ENCODE measurements at regions of chr2 and their contacts with region 1.

Region 1: DNA sequence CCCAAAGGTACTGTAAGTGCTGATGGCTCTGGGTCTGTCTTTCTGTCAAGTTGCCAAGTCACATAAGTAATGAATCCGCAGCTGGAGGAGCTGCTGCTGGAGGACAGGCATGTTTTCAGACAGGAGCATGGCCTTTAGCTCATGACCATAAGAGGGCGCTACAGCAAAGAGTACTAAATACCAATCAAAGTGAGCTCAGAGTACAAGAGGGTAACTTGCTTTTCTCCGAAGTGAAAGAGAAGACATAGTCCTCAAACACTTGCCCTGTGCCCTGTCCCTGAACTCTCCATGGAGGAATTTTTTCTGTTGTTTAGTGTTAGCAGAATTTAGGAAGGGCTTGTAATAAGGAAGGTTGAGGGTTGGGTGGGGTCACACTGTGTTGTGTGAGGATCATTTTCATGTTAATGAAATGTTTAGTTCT is 58.0 kb upstream of the EML6 start:
- DNase-seq: peak; percentile 32
- ATAC-seq: peak; percentile 83
- H3K4me3 ChIP-seq: no peak overlapping the region
- H3K27ac ChIP-seq: no peak overlapping the region
- H3K4me1 ChIP-seq: peaks cover 0 to 8% of the 10 kb centered on the region in 2 experiments; a peak in 1 of 4 replicates
- H3K27me3 ChIP-seq: no peaks in the 10 kb centered on the region
- CTCF ChIP-seq: peak; percentile 33 to 85 (median 78); a peak in 5 of 6 replicates
- POLR2A ChIP-seq: no peak
- RAD21 ChIP-seq: peak; percentile 63

Region 2: DNA sequence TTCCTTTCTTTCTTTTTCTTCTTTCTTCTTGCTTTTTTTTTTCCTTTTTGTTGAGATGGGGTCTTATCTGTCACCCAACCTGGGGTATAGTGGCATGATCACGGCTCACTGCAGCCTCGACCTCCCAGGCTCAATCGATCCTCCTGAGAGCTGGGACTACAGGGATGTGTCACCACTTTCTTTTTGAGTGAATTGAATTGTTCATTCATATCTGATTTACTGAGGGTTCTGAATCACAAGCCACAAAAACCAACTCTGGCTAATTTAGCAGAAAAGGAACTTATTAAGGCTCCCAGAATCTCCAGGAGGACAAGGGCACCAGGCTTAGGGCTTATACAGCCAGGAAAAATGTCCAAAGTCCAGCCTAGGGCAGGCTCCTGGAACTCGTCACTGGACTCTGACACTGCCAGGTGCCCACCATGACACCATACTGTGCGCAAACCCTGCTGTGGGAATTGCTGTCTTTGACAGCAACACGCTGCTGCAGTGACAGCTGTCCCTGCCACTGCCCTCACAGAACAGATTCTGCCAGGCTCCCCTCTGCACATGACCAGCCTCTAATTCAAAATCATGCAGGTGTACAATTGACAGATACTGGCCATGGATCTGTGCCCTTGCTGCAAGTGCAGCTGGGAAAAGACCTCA is 15.1 kb after region 1 on chr2:
- CTCF ChIA-PET with region 1: interaction called, 30 read pairs
- POLR2A ChIA-PET with region 1: no interaction called
- RAD21 ChIA-PET with region 1: no interaction called
- intact Hi-C with region 1: no loop called
- DNase-seq: no peak
- ATAC-seq: no peak
- H3K4me3 ChIP-seq: no peak overlapping the region
- H3K27ac ChIP-seq: no peak overlapping the region
- H3K4me1 ChIP-seq: no peaks in the 10 kb centered on the region
- H3K27me3 ChIP-seq: no peaks in the 10 kb centered on the region
- CTCF ChIP-seq: no peak
- POLR2A ChIP-seq: no peak
- RAD21 ChIP-seq: no peak

Region 3: DNA sequence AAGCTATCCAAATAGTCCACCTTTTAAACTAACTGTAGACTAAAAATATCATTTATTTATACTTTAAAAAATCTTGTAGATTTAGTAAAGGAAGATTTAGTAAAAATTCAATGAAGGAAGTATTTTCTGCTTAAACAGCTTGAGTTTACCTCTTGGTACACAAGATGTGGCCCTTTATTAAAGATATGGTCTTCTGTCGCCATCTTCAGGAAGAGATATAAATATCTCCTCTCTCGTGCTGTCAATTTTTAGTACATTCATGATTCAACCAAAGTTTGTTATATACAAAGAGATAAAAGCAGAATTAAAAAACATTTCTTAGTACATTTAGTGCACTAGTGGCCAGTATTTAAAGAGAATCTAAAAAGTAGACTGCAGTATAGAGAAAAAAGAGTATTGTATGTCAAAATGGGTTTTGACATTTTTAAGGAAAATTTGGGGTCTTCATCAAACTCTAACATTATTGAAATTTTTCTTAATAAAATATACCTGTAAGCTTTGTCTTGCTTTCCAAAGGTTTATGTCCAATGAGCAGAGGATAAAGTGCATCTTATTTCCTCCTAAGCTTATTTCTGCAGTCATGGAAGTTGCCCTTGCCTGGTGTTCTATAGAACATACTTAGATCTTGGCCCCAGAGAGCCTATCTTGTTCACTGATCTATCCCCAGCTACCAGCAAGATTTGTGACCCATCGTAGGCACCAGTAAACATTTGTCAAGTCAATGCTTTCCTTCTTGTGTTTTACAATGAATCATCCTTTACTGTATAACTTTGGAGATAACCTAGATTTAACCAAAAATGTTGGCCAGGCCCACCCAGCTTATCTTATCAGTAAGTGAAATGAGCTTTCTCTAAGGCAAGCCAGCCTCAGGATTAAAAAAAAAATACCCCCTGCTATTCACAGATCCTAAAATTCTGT is 39.5 kb after region 1 on chr2:
- CTCF ChIA-PET with region 1: interaction called, 47 read pairs
- POLR2A ChIA-PET with region 1: interaction called, 6 read pairs
- RAD21 ChIA-PET with region 1: interaction called in 1 of 2 experiments, 3 read pairs
- intact Hi-C with region 1: loop called (anchors 1 kb)
- DNase-seq: peak; percentile 42
- ATAC-seq: peak; percentile 82
- H3K4me3 ChIP-seq: no peak overlapping the region
- H3K27ac ChIP-seq: no peak overlapping the region
- H3K4me1 ChIP-seq: no peaks in the 10 kb centered on the region
- H3K27me3 ChIP-seq: no peaks in the 10 kb centered on the region
- CTCF ChIP-seq: peak; percentile 33 to 78 (median 69); a peak in 5 of 6 replicates
- POLR2A ChIP-seq: no peak
- RAD21 ChIP-seq: peak; percentile 84

Region 4: GRCh38 chr2:55010149-55010591 is 344.7 kb after region 1 on chr2:
- CTCF ChIA-PET with region 1: no interaction called
- POLR2A ChIA-PET with region 1: no interaction called
- RAD21 ChIA-PET with region 1: no interaction called
- intact Hi-C with region 1: loop called (anchors 10 kb)
- DNase-seq: no peak
- ATAC-seq: no peak
- H3K4me3 ChIP-seq: no peak overlapping the region
- H3K27ac ChIP-seq: no peak overlapping the region
- H3K4me1 ChIP-seq: peaks cover 22 to 36% of the 10 kb centered on the region in 2 experiments
- H3K27me3 ChIP-seq: no peaks in the 10 kb centered on the region
- CTCF ChIP-seq: no peak
- POLR2A ChIP-seq: no peak
- RAD21 ChIP-seq: no peak

Region 5: GRCh38 chr2:55175254-55176025 is 510.0 kb after region 1 on chr2:
- CTCF ChIA-PET with region 1: interaction called, 6 read pairs
- POLR2A ChIA-PET with region 1: no interaction called
- RAD21 ChIA-PET with region 1: no interaction called
- intact Hi-C with region 1: loop called (anchors 5 kb)
- DNase-seq: peak; percentile 37
- ATAC-seq: peak; percentile 81
- H3K4me3 ChIP-seq: no peak overlapping the region
- H3K27ac ChIP-seq: no peak overlapping the region
- H3K4me1 ChIP-seq: no peaks in the 10 kb centered on the region; a peak in 1 of 4 replicates
- H3K27me3 ChIP-seq: no peaks in the 10 kb centered on the region
- CTCF ChIP-seq: peak; percentile 34 to 69 (median 66); a peak in 4 of 6 replicates
- POLR2A ChIP-seq: no peak
- RAD21 ChIP-seq: peak; percentile 90

Measured in HCT116 (cell line).